PC-9 (cell line): ENCODE measurements at regions of chr9 and their contacts with region 1.

Region 1: GRCh38 chr9:97803167-97804058 is 49.6 kb upstream of the FOXE1 start:
- DNase-seq: peak; percentile 63 to 86
- H3K4me3 ChIP-seq: peak overlapping the region; percentile 64
- H3K27ac ChIP-seq: peak overlapping the region; percentile 85
- H3K4me1 ChIP-seq: peaks cover 64% of the 10 kb centered on the region
- H3K27me3 ChIP-seq: no peaks in the 10 kb centered on the region
- CTCF ChIP-seq: no peak

Region 2: GRCh38 chr9:97632985-97633858 is 170.2 kb before region 1 on chr9 and contains the starts of genes NCBP1 and TSTD2:
- CTCF ChIA-PET with region 1: no interaction called
- POLR2A ChIA-PET with region 1: no interaction called
- intact Hi-C with region 1: loop called (anchors 1 kb)
- DNase-seq: peak; percentile 94 to 98
- H3K4me3 ChIP-seq: peak within 1 kb of the TSS; percentile 95
- H3K27ac ChIP-seq: peak within 1 kb of the TSS; percentile 99
- H3K4me1 ChIP-seq: peaks cover 38% of the 10 kb centered on the region
- H3K27me3 ChIP-seq: no peaks in the 10 kb centered on the region
- CTCF ChIP-seq: no peak
- total RNA-seq, gene NCBP1: 38.6 and 40.2 TPM in 2 replicates
- total RNA-seq, gene TSTD2: 17.0 and 19.3 TPM in 2 replicates

Region 3: DNA sequence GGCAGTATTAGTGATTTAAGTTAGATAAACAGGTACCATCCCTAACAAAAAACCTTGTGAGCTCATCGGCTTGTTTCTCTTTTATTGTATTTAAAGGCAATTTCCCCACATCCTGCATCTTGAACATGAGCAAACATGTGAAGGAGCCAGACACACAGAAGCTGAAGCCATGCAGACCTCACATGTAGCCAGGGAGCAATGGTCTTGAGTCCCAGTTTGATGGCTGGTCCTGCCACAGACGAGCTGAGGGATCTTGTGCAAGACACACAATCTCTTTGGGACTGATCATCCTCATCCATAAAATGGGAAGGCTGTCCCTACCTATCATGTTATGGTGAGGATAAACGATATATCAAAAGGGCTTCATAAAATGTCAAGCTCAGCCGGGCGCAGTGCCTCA is 76.7 kb before region 1 on chr9:
- CTCF ChIA-PET with region 1: no interaction called
- POLR2A ChIA-PET with region 1: interaction called, 28 read pairs
- intact Hi-C with region 1: no loop called
- DNase-seq: no peak
- H3K4me3 ChIP-seq: no peak overlapping the region
- H3K27ac ChIP-seq: no peak overlapping the region
- H3K4me1 ChIP-seq: peaks cover 8% of the 10 kb centered on the region; the same call in 1 of the 2 replicates
- H3K27me3 ChIP-seq: no peaks in the 10 kb centered on the region
- CTCF ChIP-seq: no peak

Region 4: GRCh38 chr9:97853844-97854695 is 50.7 kb after region 1 on chr9:
- CTCF ChIA-PET with region 1: interaction called, 3 read pairs
- POLR2A ChIA-PET with region 1: interaction called, 32 read pairs
- intact Hi-C with region 1: loop called (anchors 2 kb)
- DNase-seq: peak in 1 of 2 experiments; percentile 53
- H3K4me3 ChIP-seq: peak overlapping the region; percentile 64
- H3K27ac ChIP-seq: peak overlapping the region; percentile 56; the same call in 1 of the 2 replicates
- H3K4me1 ChIP-seq: peaks cover 6% of the 10 kb centered on the region; the same call in 1 of the 2 replicates
- H3K27me3 ChIP-seq: no peaks in the 10 kb centered on the region
- CTCF ChIP-seq: no peak

Region 5: DNA sequence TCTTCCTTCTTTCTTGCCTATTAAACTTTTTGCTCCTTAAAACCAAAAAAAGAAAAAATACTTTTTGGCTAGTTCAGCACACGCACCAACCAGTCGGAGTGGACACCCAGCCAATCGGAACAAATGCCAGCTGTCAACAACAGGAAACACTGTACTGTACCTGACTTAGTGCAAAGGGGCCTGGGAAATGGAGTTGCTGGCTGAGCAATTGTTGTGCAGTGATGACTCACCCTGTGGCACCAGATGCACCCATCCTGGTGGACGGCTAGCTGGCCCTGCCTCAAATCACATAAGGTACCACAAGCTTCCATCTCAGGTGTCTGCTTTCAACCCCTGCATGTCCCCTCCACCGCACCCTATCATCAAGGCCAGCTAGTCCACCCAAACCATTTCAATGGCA is 70.5 kb after region 1 on chr9:
- CTCF ChIA-PET with region 1: no interaction called
- POLR2A ChIA-PET with region 1: no interaction called
- intact Hi-C with region 1: loop called (anchors 2 kb)
- DNase-seq: peak; percentile 60 to 69
- H3K4me3 ChIP-seq: no peak overlapping the region
- H3K27ac ChIP-seq: peak overlapping the region; percentile 13; the same call in 1 of the 2 replicates
- H3K4me1 ChIP-seq: peaks cover 28% of the 10 kb centered on the region
- H3K27me3 ChIP-seq: no peaks in the 10 kb centered on the region
- CTCF ChIP-seq: no peak

Region 6: GRCh38 chr9:97900738-97901565 is 97.5 kb after region 1 on chr9:
- CTCF ChIA-PET with region 1: no interaction called
- POLR2A ChIA-PET with region 1: no interaction called
- intact Hi-C with region 1: loop called (anchors 5 kb)
- DNase-seq: peak in 1 of 2 experiments; percentile 43
- H3K4me3 ChIP-seq: no peak overlapping the region
- H3K27ac ChIP-seq: no peak overlapping the region
- H3K4me1 ChIP-seq: no peaks in the 10 kb centered on the region
- H3K27me3 ChIP-seq: no peaks in the 10 kb centered on the region
- CTCF ChIP-seq: peak; percentile 81